ENCODE measurements at regions of chr5 and their contacts with region 1.

Region 1: DNA sequence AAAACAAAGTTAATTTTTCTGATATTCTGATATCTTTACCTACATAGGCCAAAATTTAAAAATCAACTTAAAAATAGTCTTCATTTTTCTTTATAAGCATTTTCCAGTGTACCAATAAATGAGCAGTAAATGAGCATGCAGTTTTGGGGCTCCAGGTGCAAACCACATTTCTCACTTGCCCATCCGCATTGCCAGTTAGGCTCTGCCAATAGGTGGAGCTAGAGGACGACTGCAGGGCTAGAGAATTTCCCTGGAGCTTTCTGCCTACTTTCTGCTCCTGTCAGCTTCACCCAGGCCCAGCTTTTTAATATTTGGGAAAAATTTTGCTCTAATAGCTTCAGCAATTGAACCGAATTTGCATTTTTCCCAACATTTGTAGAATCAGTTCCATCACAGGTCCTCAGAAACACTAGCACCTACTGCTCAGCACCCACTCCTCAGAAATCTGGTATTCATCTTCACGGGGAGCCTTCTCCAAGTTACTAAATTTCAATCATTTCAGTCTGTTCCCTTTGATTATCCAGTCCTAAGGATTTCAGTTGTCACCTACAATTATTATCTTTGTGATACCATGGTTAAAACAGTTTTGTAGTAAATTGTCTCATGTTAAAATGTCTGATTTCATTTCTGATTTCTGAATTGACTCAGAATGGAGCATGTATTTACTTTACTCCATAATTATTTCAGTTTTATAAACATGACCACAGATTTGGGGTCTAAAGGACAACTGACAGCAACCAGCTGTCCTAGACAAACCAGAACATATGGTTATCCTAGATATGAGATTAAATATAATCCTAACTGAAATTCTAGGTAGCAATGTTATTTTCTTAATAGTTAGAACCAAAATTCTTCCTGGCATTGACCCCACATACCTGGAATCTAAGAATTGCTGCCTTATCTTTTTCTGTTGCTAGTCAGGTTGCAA is 104.6 kb upstream of the FAM174A start:
- DNase-seq: peak; percentile 7
- H3K4me3 ChIP-seq: no peak overlapping the region
- H3K27ac ChIP-seq: no peak overlapping the region
- H3K27me3 ChIP-seq: no peaks in the 10 kb centered on the region
- CTCF ChIP-seq: peak; percentile 99

Region 2: GRCh38 chr5:99724732-99725290 is 705.7 kb before region 1 on chr5:
- CTCF ChIA-PET with region 1: no interaction called
- POLR2A ChIA-PET with region 1: no interaction called
- DNase-seq: no peak
- H3K4me3 ChIP-seq: no peak overlapping the region
- H3K27ac ChIP-seq: no peak overlapping the region
- H3K27me3 ChIP-seq: no peaks in the 10 kb centered on the region
- CTCF ChIP-seq: no peak

Region 3: GRCh38 chr5:100697970-100698369 is 267.4 kb after region 1 on chr5:
- CTCF ChIA-PET with region 1: no interaction called
- POLR2A ChIA-PET with region 1: no interaction called
- DNase-seq: no peak
- H3K4me3 ChIP-seq: no peak overlapping the region
- H3K27ac ChIP-seq: no peak overlapping the region
- H3K27me3 ChIP-seq: no peaks in the 10 kb centered on the region
- CTCF ChIP-seq: peak; percentile 44

Region 4: GRCh38 chr5:101390151-101390908 is 959.8 kb after region 1 on chr5:
- CTCF ChIA-PET with region 1: interaction called, 21 read pairs
- POLR2A ChIA-PET with region 1: no interaction called
- DNase-seq: peak; percentile 0
- H3K4me3 ChIP-seq: no peak overlapping the region
- H3K27ac ChIP-seq: no peak overlapping the region
- H3K27me3 ChIP-seq: no peaks in the 10 kb centered on the region
- CTCF ChIP-seq: peak; percentile 70